Lower lobe of right lung (tissue), 2 donors: ENCODE measurements at regions of chr21 and their contacts with region 1.

Region 1: GRCh38 chr21:26169061-26169610 is 1.4 kb downstream of the APP start:
- DNase-seq: no peak
- ATAC-seq: peak; percentile 52 to 56
- H3K4me3 ChIP-seq: peak overlapping the region; percentile 96
- H3K27ac ChIP-seq: peak overlapping the region; percentile 85
- H3K4me1 ChIP-seq: peaks cover 43% of the 10 kb centered on the region
- H3K27me3 ChIP-seq: no peaks in the 10 kb centered on the region
- CTCF ChIP-seq: peak; percentile 22

Region 2: DNA sequence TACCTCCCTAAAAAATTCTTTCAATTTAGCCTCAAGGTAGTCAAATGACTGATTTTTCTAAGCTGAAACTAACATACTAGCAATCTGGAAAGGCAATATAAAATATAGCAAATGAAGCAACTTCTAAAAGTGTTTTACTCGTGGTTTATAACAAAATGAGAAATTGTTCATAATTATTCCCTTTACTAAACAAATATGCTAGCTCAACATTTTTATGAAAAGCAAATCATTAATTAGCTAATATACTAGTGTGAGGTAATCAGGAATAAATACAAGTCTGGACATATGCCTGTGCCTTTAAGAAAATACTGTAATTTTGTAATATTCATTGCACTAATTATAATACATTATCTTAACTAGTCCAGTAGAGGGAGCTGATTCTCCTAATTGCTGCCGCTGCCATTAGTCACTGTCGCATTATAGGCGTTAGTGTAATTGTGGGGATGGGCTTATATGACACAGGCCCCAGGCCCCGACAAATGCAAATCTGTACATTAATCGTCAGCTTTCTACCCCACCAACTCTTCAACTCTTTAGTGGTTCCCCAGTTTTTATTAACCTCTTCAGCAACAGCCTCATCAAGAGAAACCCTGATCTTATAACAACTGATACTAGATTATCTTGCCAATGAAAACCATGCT is 273.5 kb before region 1 on chr21:
- intact Hi-C with region 1: loop called (anchors 10 kb)
- DNase-seq: no peak
- ATAC-seq: peak; percentile 59 to 62
- H3K4me3 ChIP-seq: no peak overlapping the region
- H3K27ac ChIP-seq: no peak overlapping the region
- H3K4me1 ChIP-seq: no peaks in the 10 kb centered on the region
- H3K27me3 ChIP-seq: no peaks in the 10 kb centered on the region
- CTCF ChIP-seq: peak; percentile 38

Region 3: DNA sequence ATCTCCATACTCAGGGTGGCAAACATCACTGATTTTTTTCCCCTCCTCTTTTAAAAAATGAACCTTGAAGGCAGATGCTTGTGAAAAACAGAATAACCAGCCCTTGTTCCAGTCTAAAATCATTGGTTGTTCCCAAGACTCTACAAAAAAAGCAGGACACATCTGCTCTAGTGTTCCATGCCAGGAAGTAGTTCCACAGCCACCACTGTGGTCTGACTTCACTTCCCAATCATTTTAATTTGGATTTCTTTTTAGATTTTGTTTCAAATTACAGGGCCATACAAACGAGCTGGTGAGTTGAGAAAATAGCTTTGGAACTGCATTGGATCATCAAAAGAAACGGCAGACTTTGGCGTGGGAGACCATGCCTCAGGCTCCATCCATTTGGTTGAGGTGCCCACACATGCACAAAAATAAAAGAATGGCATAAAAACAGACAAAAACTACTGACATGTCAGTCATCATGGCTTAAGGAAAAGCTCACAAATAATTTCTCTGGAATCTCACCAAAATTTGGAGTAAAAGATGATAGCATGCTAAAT is 224.4 kb before region 1 on chr21:
- intact Hi-C with region 1: no loop called
- DNase-seq: no peak
- ATAC-seq: no peak
- H3K4me3 ChIP-seq: no peak overlapping the region
- H3K27ac ChIP-seq: no peak overlapping the region
- H3K4me1 ChIP-seq: peaks cover 3% of the 10 kb centered on the region
- H3K27me3 ChIP-seq: no peaks in the 10 kb centered on the region
- CTCF ChIP-seq: no peak